ENCODE measurements at regions of chr17 and their contacts with region 1.

Region 1: GRCh38 chr17:2172077-2172851 is 117.4 kb downstream of the HIC1 start:
- DNase-seq: peak; percentile 98
- H3K4me3 ChIP-seq: peak overlapping the region; percentile 31
- H3K27ac ChIP-seq: peak overlapping the region; percentile 98
- H3K27me3 ChIP-seq: no peaks in the 10 kb centered on the region
- CTCF ChIP-seq: no peak

Region 2: GRCh38 chr17:2054512-2055291 is 117.6 kb before region 1 on chr17 and contains the start of gene HIC1:
- CTCF ChIA-PET with region 1: interaction called, 3 read pairs
- POLR2A ChIA-PET with region 1: interaction called, 14 read pairs
- DNase-seq: no peak
- H3K4me3 ChIP-seq: peak within 1 kb of the TSS; percentile 72
- H3K27ac ChIP-seq: peak within 1 kb of the TSS; percentile 47
- H3K27me3 ChIP-seq: peaks cover 4% of the 10 kb centered on the region
- CTCF ChIP-seq: peak; percentile 72
- polyA plus RNA-seq, gene HIC1: 12.7 and 14.4 TPM in 2 replicates

Region 3: GRCh38 chr17:2122641-2123302 is 49.5 kb before region 1 on chr17:
- CTCF ChIA-PET with region 1: no interaction called
- POLR2A ChIA-PET with region 1: interaction called, 11 read pairs
- DNase-seq: peak; percentile 66
- H3K4me3 ChIP-seq: peak overlapping the region; percentile 29
- H3K27ac ChIP-seq: peak overlapping the region; percentile 90
- H3K27me3 ChIP-seq: no peaks in the 10 kb centered on the region
- CTCF ChIP-seq: peak; percentile 36

Region 4: GRCh38 chr17:2143332-2143731 is 28.9 kb before region 1 on chr17:
- CTCF ChIA-PET with region 1: no interaction called
- POLR2A ChIA-PET with region 1: interaction called, 10 read pairs
- DNase-seq: no peak
- H3K4me3 ChIP-seq: no peak overlapping the region
- H3K27ac ChIP-seq: no peak overlapping the region
- H3K27me3 ChIP-seq: no peaks in the 10 kb centered on the region
- CTCF ChIP-seq: no peak

Region 5: DNA sequence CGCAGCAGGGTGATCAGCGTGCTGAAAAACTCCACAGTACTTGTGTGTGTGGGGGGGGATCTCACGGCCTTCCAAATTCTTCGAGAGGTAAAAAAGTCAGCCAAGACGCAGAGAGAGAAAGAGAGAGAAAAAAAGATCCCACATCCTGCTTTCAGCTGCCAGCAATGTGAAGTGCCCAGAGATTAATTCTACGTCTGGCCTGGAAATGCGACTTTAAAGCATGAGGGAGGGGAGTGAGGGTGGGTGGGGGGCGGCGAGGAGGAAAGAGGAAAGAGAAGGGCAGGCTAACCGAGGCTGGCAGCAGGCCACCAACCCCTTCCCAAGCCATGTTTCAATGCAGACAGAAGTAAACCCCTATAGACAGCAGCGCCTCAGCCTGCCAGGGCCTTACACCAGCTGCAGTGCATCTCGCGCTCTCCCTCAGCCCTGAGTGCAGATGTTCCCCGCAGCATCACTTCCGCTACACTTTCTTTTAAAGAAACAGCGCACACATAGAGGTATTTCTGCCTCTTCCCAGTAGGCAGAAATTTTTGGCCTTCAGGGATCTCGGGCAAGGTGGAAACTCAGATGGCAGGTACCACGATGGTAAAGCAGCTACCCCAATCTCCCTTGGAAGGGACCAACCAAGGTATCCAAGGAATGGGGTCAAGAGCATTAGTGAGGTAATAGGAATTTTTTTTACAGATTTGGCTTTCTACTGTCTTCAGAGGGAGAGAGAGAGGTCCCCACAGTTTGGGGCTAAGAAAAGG is 43.5 kb after region 1 on chr17:
- CTCF ChIA-PET with region 1: no interaction called
- POLR2A ChIA-PET with region 1: interaction called, 14 read pairs
- DNase-seq: peak; percentile 85
- H3K4me3 ChIP-seq: peak overlapping the region; percentile 23
- H3K27ac ChIP-seq: peak overlapping the region; percentile 100
- H3K27me3 ChIP-seq: no peaks in the 10 kb centered on the region
- CTCF ChIP-seq: no peak

Region 6: DNA sequence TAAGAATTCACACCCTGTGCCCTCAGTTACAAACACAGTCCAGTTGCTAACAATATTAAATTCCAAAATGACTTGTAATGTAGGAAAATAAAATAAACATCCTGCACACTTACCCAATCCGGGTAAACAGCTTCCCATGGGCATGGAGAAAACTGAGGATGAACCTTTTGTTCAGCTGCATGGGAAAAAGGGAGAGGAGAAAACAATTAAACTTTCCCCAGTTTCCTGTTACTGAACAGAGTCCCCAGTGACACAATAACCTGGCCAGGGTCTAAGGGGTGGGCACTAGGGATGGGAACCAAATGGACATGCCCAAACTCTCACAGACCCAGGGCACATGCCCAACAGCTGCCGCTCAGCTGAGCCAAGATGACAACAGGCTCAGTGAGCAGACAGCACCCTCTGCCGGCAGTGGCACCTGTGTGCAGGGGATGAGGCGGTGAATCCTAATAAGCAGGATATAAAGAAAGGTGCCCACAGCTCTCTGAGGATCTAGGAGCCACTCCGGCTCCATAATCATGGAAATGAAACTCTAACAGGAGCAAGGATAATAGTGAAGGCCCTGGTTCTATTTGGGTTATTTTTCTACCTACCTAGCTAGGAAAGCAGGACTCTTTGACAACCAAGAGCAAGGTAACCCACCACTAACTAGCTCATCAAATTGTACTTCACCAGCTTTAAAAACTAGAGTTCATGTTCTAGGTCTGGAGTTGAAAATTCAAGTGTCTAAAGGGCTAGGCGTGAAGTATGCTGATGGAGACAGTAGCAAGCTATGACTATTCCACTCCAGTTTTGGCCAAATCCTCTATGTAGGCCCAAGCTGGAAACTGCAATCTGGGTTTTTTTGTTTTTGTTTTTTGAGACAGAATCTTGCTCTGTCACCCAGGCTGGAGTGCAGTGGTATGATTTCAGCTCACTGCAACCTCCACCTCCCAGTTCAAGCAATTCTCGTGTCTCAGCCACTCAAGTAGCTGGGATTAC is 72.6 kb after region 1 on chr17:
- CTCF ChIA-PET with region 1: interaction called, 4 read pairs
- POLR2A ChIA-PET with region 1: interaction called, 16 read pairs
- DNase-seq: peak; percentile 77
- H3K4me3 ChIP-seq: peak overlapping the region; percentile 21; the same call in 1 of the 2 replicates
- H3K27ac ChIP-seq: peak overlapping the region; percentile 98
- H3K27me3 ChIP-seq: no peaks in the 10 kb centered on the region
- CTCF ChIP-seq: peak; percentile 99